CD4-positive, alpha-beta memory T cell (primary cell): ENCODE measurements at regions of chr10 and their contacts with region 1.

Region 1: DNA sequence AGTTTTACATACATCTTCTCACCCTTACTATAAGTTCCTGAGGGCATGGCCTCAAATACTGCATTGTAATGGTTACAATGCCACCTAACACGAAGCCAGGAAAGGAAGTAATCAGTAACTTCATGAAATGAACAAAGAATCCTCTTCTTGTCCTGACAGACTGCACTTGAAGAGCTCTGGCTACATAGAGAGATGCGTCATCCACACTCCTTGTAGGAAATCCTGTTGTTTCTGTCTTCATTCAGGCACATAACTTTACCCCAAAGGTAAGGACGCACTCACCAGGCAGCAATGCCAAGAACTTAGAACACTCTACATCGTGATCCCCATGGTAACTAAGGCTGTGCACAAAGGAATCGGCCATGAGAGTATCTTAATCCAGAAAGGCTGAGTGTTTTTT is 80.3 kb upstream of the ARID5B start:
- DNase-seq: no peak
- H3K4me3 ChIP-seq: no peak overlapping the region
- H3K4me3 Mint-ChIP-seq: no peak overlapping the region
- H3K27ac ChIP-seq: no peak overlapping the region
- H3K27ac Mint-ChIP-seq: no peak overlapping the region
- H3K4me1 ChIP-seq: no peaks in the 10 kb centered on the region
- H3K4me1 Mint-ChIP-seq: no peaks in the 10 kb centered on the region
- H3K27me3 ChIP-seq: no peaks in the 10 kb centered on the region
- H3K27me3 Mint-ChIP-seq: no peaks in the 10 kb centered on the region

Region 2: DNA sequence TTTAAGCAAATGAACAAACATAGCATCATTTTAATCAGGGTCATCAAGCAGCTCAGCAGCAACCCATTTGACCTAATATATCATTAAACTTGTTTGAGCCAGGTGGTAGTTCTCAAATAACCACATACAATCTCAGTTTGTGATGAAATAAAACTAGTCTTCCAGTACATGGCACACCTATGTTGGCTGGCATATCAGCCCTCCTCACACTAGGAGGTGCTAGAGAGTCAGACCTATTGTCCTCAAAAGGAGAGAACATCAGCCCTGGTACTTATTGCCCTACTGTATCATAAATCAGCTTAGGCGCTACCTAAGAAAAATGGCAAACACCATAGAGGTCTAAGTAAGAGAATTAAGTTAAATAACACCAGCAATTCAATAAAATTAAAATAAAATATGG is 76.7 kb before region 1 on chr10:
- CTCF ChIA-PET with region 1: interaction called, 81 read pairs
- POLR2A ChIA-PET with region 1: no interaction called
- intact Hi-C with region 1: no loop called
- DNase-seq: no peak
- H3K4me3 ChIP-seq: no peak overlapping the region
- H3K4me3 Mint-ChIP-seq: no peak overlapping the region
- H3K27ac ChIP-seq: no peak overlapping the region
- H3K27ac Mint-ChIP-seq: no peak overlapping the region
- H3K4me1 ChIP-seq: no peaks in the 10 kb centered on the region
- H3K4me1 Mint-ChIP-seq: no peaks in the 10 kb centered on the region
- H3K27me3 ChIP-seq: no peaks in the 10 kb centered on the region
- H3K27me3 Mint-ChIP-seq: peaks cover 0 to 3% of the 10 kb centered on the region in 2 donors

Region 3: GRCh38 chr10:61869774-61870525 is 48.8 kb after region 1 on chr10:
- CTCF ChIA-PET with region 1: no interaction called
- POLR2A ChIA-PET with region 1: no interaction called
- intact Hi-C with region 1: no loop called
- DNase-seq: no peak
- H3K4me3 ChIP-seq: no peak overlapping the region
- H3K4me3 Mint-ChIP-seq: peak overlapping the region in 1 of 8 donors; percentile 28
- H3K27ac ChIP-seq: no peak overlapping the region
- H3K27ac Mint-ChIP-seq: no peak overlapping the region
- H3K4me1 ChIP-seq: peaks cover 4% of the 10 kb centered on the region
- H3K4me1 Mint-ChIP-seq: peaks cover 0 to 9% (median 3%) of the 10 kb centered on the region in 4 donors
- H3K27me3 ChIP-seq: no peaks in the 10 kb centered on the region
- H3K27me3 Mint-ChIP-seq: no peaks in the 10 kb centered on the region